ENCODE measurements at regions of chr6 and their contacts with region 1.

Region 1: GRCh38 chr6:96626759-96627364 is 63.9 kb downstream of the FHL5 start:
- DNase-seq: peak in 2 of 9 experiments; percentile 15 to 35
- ATAC-seq: peak; percentile 36
- H3K4me3 ChIP-seq: no peak overlapping the region
- H3K4me3 Mint-ChIP-seq: no peak overlapping the region
- H3K27ac ChIP-seq: no peak overlapping the region
- H3K27ac Mint-ChIP-seq: no peak overlapping the region
- H3K4me1 ChIP-seq: no peaks in the 10 kb centered on the region
- H3K4me1 Mint-ChIP-seq: no peaks in the 10 kb centered on the region
- H3K27me3 ChIP-seq: no peaks in the 10 kb centered on the region
- H3K27me3 Mint-ChIP-seq: peaks cover 9% of the 10 kb centered on the region
- CTCF ChIP-seq: peak; percentile 44

Region 2: GRCh38 chr6:96675597-96675996 is 48.7 kb after region 1 on chr6:
- CTCF ChIA-PET with region 1: no interaction called
- POLR2A ChIA-PET with region 1: no interaction called
- intact Hi-C with region 1: no loop called
- DNase-seq: no peak
- ATAC-seq: no peak
- H3K4me3 ChIP-seq: no peak overlapping the region
- H3K4me3 Mint-ChIP-seq: no peak overlapping the region
- H3K27ac ChIP-seq: no peak overlapping the region
- H3K27ac Mint-ChIP-seq: no peak overlapping the region
- H3K4me1 ChIP-seq: no peaks in the 10 kb centered on the region
- H3K4me1 Mint-ChIP-seq: no peaks in the 10 kb centered on the region
- H3K27me3 ChIP-seq: no peaks in the 10 kb centered on the region
- H3K27me3 Mint-ChIP-seq: peaks cover 4% of the 10 kb centered on the region
- CTCF ChIP-seq: no peak

Region 3: DNA sequence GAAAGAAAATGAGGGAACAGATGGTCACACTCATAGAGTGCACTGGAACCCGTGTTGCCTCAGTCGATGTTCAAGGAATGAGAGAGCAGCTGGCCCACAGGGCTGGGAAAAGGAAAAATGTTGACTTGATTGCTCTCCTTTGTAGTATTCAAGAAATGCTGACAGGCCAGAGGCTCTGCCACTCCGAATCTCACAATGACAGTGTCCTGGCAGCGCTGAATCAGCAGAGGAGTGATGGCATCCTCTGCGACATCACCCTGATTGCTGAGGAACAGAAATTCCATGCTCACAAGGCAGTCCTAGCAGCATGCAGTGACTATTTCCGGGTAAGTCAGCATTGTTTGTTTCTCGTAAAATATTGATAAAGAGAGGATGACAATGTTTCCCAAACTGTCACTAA is 349.0 kb after region 1 on chr6:
- CTCF ChIA-PET with region 1: no interaction called
- POLR2A ChIA-PET with region 1: no interaction called
- intact Hi-C with region 1: loop called in 1 of 2 experiments (anchors 10 kb)
- DNase-seq: no peak
- ATAC-seq: no peak
- H3K4me3 ChIP-seq: no peak overlapping the region
- H3K4me3 Mint-ChIP-seq: no peak overlapping the region
- H3K27ac ChIP-seq: no peak overlapping the region
- H3K27ac Mint-ChIP-seq: no peak overlapping the region
- H3K4me1 ChIP-seq: no peaks in the 10 kb centered on the region
- H3K4me1 Mint-ChIP-seq: no peaks in the 10 kb centered on the region
- H3K27me3 ChIP-seq: no peaks in the 10 kb centered on the region
- H3K27me3 Mint-ChIP-seq: no peaks in the 10 kb centered on the region
- CTCF ChIP-seq: no peak

Region 4: GRCh38 chr6:97053643-97054411 is 427.0 kb after region 1 on chr6:
- CTCF ChIA-PET with region 1: interaction called, 38 read pairs
- POLR2A ChIA-PET with region 1: interaction called, 4 read pairs
- intact Hi-C with region 1: loop called in 1 of 2 experiments (anchors 1 kb)
- DNase-seq: no peak
- ATAC-seq: no peak
- H3K4me3 ChIP-seq: no peak overlapping the region
- H3K4me3 Mint-ChIP-seq: no peak overlapping the region
- H3K27ac ChIP-seq: no peak overlapping the region
- H3K27ac Mint-ChIP-seq: no peak overlapping the region
- H3K4me1 ChIP-seq: no peaks in the 10 kb centered on the region
- H3K4me1 Mint-ChIP-seq: peaks cover 10% of the 10 kb centered on the region
- H3K27me3 ChIP-seq: no peaks in the 10 kb centered on the region
- H3K27me3 Mint-ChIP-seq: no peaks in the 10 kb centered on the region
- CTCF ChIP-seq: peak; percentile 29

Measured in CD8-positive, alpha-beta T cell (primary cell).